Thyroid gland (tissue), 4 donors: ENCODE measurements at regions of chr1 and their contacts with region 1.

Region 1: DNA sequence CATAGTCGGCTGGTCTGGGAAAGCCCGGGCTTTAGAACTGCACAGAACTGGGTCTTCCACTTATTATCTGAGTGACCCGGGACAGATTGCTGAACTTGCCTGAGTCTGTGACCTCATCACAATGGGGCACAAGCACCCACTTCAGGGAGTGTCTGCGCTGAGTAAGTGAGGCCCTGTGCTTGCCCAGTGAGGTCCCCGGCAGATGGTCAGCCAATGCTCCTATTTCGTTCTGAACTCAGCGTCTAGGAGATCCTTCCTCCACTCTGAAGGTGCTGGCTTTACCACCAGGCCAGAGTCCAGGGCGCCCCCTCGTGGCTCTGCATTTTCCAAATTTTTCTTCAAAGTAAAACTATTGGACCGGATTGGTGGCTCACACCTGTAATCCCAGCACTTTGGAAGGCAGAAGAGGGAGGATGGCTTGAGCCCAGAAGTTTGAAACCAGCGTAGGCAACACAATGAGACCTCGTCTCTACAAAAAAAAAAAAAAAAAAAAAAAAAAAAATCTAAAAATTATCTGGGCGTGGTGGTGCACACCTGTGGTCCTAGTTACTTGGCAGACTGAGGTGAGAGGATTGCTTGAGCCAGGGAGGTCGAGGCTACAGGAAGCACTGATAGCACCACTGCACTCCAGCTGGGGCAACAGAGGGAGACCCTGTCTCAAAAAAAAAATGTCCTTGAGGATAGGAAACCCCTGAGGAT is 61.7 kb downstream of the FCRL5 start:
- DNase-seq: peak; percentile 82 to 86
- H3K4me3 ChIP-seq: no peak overlapping the region
- H3K27ac ChIP-seq: no peak overlapping the region
- H3K4me1 ChIP-seq: no peaks in the 10 kb centered on the region
- H3K27me3 ChIP-seq: no peaks in the 10 kb centered on the region
- CTCF ChIP-seq: peak in 5 of 6 experiments; percentile 22 to 67 (median 55)
- POLR2A ChIP-seq: no peak

Region 2: DNA sequence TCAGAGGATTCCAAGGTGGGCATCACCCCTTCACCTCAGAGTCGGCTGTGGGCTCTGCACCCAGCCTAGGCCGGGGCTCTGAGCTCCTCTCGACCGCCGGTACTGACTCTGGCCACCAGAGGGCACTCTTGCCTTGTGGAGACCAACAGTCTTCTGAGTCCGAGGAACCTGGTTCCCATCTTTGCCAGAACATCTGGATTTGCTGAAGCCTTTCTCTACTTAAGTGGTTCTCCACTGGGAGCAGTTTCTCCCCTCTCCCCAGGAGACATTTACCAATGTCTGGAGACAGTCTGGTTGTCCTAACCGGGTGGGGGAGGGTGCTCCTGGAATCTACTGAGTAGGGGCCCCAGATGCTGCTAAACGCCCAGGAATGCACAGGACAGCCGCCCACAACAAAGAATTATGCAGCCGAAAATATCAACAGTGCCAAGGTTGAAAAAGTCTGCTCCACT is 400.4 kb before region 1 on chr1:
- intact Hi-C with region 1: loop called (anchors 10 kb)
- DNase-seq: peak; percentile 84 to 89
- H3K4me3 ChIP-seq: no peak overlapping the region
- H3K27ac ChIP-seq: no peak overlapping the region
- H3K4me1 ChIP-seq: peaks cover 4 to 9% of the 10 kb centered on the region in 2 donors
- H3K27me3 ChIP-seq: no peaks in the 10 kb centered on the region
- CTCF ChIP-seq: peak; percentile 81 to 92 (median 86)
- POLR2A ChIP-seq: no peak

Region 3: DNA sequence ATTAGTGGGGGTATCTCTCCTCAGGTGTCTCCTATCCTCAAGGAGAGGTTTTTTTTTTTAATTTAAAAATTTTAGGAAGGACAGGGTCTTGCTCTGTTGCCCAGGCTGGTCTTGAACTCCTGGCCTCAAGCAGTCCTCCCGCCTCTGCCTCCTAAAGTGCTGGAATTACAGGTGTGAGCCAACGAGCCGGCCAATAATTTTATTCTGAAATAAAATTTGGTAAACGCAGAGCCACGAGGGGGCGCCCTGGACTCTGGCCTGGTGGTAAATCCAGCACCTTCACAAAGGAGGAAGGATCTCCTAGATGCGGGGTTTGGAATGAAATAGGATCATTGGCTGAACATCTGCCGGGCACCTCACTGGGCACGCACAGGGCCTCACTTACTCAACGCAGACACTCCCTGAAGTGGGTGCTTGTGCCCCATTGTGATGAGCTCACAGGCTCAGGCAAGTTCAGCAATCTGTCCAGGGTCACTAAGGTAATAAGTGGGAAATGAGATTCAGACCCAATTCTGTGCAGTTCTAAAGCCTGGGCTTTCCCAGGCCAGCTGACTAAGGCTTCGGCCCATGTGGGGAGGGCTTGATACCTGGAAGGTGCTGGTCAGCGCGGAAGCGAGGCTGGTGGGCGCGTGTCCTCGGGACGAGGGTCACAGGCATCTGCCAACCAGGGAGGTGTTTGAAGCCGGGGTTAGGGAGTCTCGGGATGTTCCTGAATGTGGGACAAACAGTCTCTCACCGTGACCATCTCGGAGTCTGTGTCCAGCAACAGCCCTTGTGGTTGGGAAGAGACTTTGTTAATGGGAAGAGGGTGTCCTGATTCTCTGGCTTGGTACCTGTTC is 319.7 kb before region 1 on chr1:
- intact Hi-C with region 1: loop called (anchors 5 kb)
- DNase-seq: peak; percentile 12 to 23
- H3K4me3 ChIP-seq: no peak overlapping the region
- H3K27ac ChIP-seq: no peak overlapping the region
- H3K4me1 ChIP-seq: no peaks in the 10 kb centered on the region
- H3K27me3 ChIP-seq: no peaks in the 10 kb centered on the region
- CTCF ChIP-seq: peak in 2 of 6 experiments; percentile 14 to 27
- POLR2A ChIP-seq: no peak

Region 4: DNA sequence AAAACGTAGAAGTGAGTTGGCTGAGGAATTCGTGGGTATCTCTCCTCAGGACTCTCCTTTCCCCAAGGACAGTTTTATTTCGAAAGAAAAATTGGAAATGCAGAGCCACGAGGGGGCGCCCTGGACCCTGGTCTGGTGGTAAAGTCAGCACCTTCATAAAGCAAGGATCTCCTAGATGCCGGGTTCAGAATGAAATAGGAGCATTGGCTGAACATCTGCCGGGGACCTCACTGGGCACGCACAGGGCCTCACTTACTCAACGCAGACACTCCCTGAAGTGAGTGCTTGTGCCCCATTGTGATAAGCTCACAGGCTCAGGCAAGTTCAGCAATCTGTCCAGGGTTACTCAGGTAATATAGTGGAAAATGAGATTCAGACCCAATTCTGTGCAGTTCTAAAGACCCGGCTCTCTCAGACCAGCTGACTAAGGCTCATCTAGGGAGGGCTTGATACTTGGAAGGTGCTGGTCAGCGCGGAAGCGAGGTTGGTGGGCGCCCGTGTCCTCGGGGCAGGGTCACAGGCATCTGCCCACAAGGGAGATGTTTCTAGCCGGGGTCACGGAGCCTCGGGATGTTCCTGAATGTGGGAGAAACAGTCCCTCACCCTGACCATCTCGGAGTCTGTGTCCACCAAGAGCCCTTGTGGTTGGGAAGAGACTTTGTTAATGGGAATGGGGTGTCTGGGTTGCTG is 296.8 kb before region 1 on chr1:
- intact Hi-C with region 1: loop called (anchors 5 kb)
- DNase-seq: peak; percentile 71 to 82
- H3K4me3 ChIP-seq: no peak overlapping the region
- H3K27ac ChIP-seq: no peak overlapping the region
- H3K4me1 ChIP-seq: no peaks in the 10 kb centered on the region
- H3K27me3 ChIP-seq: no peaks in the 10 kb centered on the region
- CTCF ChIP-seq: peak; percentile 13 to 76 (median 52)
- POLR2A ChIP-seq: no peak

Region 5: GRCh38 chr1:157369808-157370521 is 120.7 kb before region 1 on chr1:
- intact Hi-C with region 1: loop called (anchors 5 kb)
- DNase-seq: peak; percentile 28 to 31
- H3K4me3 ChIP-seq: no peak overlapping the region
- H3K27ac ChIP-seq: no peak overlapping the region
- H3K4me1 ChIP-seq: no peaks in the 10 kb centered on the region
- H3K27me3 ChIP-seq: no peaks in the 10 kb centered on the region
- CTCF ChIP-seq: peak; percentile 70 to 96 (median 76)
- POLR2A ChIP-seq: no peak